Endothelial cell of umbilical vein (primary cell): ENCODE measurements at regions of chr18 and their contacts with region 1.

Region 1: DNA sequence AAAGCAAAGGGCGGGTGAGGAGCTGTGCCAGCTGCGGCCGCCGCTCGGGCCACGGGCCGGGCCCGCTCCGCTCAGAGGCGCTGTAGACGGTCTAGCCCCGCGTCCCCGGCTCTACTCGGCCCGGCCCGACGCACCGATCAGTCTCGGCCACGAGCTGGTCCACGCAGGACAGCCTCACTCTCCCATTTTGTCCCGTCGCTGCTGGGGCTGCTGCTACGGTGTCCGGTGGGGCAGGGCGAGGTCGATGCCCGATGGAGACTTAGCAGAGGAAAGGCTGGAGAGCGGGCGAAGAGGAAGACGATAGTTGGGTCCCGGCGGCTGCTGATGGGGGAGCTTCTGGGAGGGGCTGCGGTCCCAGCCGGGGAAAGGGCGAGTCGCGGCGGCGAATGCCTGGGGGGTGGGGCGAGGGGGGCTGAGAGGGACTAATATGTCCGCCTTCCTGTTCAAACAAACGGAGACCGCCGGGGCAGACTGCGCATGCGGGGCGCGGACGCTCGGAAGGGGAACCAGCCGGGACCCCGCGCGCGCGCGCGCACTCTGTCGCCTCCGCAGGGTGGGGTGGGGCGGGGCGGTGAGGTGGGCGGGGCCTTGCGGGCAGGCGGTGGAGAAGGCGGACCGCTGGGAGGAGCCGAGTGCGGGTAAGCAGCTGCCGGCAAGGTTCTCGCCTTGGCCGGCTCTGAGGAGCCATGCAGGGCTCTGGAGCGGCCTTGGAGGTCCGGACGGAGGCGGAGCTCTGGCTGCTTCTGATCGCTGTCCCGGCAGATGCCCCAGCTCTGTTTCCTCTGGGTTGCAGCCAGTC is at the start of gene ROCK1:
- DNase-seq: peak; percentile 96
- H3K4me3 ChIP-seq: peak within 1 kb of the TSS; percentile 73 to 100 (median 99)
- H3K27ac ChIP-seq: peak within 1 kb of the TSS; percentile 61
- H3K4me1 ChIP-seq: peaks cover 23% of the 10 kb centered on the region
- H3K27me3 ChIP-seq: peaks cover 0 to 3% of the 10 kb centered on the region in 2 experiments
- CTCF ChIP-seq: no peak
- POLR2A ChIP-seq: peak; percentile 59
- total RNA-seq, gene ROCK1: 53.0 and 53.7 TPM in 2 replicates

Region 2: GRCh38 chr18:20971886-20972267 is 139.7 kb before region 1 on chr18:
- CTCF ChIA-PET with region 1: interaction called, 13 read pairs
- POLR2A ChIA-PET with region 1: no interaction called
- dilution Hi-C with region 1: no loop called
- intact Hi-C with region 1: loop called (anchors 2 kb)
- DNase-seq: peak; percentile 42
- H3K4me3 ChIP-seq: no peak overlapping the region
- H3K27ac ChIP-seq: no peak overlapping the region
- H3K4me1 ChIP-seq: no peaks in the 10 kb centered on the region
- H3K27me3 ChIP-seq: no peaks in the 10 kb centered on the region
- CTCF ChIP-seq: peak; percentile 25 to 53
- POLR2A ChIP-seq: no peak

Region 3: DNA sequence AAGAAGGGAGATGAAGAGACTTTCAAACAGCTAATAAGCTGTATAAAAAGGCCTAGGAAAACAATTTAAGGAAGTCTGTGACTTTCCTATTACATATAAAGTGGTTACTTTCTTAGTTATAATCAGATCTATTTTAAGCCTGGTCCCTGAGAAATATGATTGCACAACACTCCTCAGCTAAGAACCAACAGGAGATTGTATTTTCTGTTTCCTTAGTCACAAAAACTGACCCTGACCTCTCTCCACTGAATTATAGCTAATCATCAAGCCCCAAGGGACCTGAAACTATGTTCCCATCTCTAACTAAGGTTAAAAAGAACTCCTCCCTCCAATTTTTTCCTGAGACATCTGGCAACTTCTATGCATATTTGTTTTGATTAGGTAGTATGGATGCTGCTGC is 106.8 kb before region 1 on chr18:
- CTCF ChIA-PET with region 1: no interaction called
- POLR2A ChIA-PET with region 1: no interaction called
- dilution Hi-C with region 1: no loop called
- intact Hi-C with region 1: loop called (anchors 10 kb)
- DNase-seq: peak; percentile 42
- H3K4me3 ChIP-seq: no peak overlapping the region
- H3K27ac ChIP-seq: no peak overlapping the region
- H3K4me1 ChIP-seq: no peaks in the 10 kb centered on the region
- H3K27me3 ChIP-seq: no peaks in the 10 kb centered on the region
- CTCF ChIP-seq: no peak
- POLR2A ChIP-seq: no peak

Region 4: GRCh38 chr18:21049306-21049705 is 62.2 kb before region 1 on chr18:
- CTCF ChIA-PET with region 1: no interaction called
- POLR2A ChIA-PET with region 1: no interaction called
- dilution Hi-C with region 1: no loop called
- intact Hi-C with region 1: loop called (anchors 2 kb)
- DNase-seq: peak; percentile 69
- H3K4me3 ChIP-seq: no peak overlapping the region
- H3K27ac ChIP-seq: no peak overlapping the region
- H3K4me1 ChIP-seq: peaks cover 9% of the 10 kb centered on the region
- H3K27me3 ChIP-seq: no peaks in the 10 kb centered on the region
- CTCF ChIP-seq: no peak
- POLR2A ChIP-seq: no peak

Region 5: DNA sequence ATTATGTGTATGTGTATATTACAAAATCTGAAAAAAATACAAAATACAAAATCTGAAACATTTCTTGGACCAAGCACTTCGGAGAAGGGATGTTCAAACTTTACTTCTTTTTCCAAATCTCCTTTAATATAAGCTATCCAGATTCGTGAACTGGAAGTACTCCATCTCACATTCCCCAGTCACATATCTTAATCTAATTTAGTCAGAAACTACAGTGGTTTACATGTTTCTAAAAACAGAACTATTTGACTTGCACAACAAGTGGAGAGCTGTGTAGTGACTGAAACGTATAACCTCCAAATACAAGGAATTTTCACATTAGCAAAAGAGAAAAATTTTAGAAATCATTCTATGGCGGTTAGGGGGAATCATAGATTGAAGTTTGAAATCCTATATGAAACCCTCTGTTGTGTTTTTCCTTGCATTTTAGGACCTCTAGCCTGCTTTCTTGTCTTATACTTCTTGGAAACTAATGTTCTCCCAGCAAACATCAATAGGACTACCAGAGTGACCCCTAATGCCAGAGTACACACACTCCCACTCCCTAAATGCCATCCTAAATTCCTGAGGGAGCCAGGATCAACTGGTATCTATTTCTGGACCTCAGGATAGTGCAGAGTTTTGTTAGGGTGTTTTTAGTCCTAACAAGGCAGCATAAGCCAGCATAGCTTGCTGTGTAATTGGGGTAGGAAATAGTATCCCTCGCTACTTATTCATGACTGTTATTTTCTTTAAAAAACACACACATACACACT is 30.3 kb after region 1 on chr18:
- CTCF ChIA-PET with region 1: no interaction called
- POLR2A ChIA-PET with region 1: no interaction called
- dilution Hi-C with region 1: no loop called
- intact Hi-C with region 1: no loop called
- DNase-seq: no peak
- H3K4me3 ChIP-seq: no peak overlapping the region
- H3K27ac ChIP-seq: no peak overlapping the region
- H3K4me1 ChIP-seq: no peaks in the 10 kb centered on the region
- H3K27me3 ChIP-seq: peaks cover 0 to 4% of the 10 kb centered on the region in 2 experiments
- CTCF ChIP-seq: no peak
- POLR2A ChIP-seq: no peak

Region 6: GRCh38 chr18:21155443-21155842 is 43.9 kb after region 1 on chr18:
- CTCF ChIA-PET with region 1: no interaction called
- POLR2A ChIA-PET with region 1: no interaction called
- dilution Hi-C with region 1: no loop called
- intact Hi-C with region 1: no loop called
- DNase-seq: no peak
- H3K4me3 ChIP-seq: no peak overlapping the region
- H3K27ac ChIP-seq: no peak overlapping the region
- H3K4me1 ChIP-seq: no peaks in the 10 kb centered on the region
- H3K27me3 ChIP-seq: no peaks in the 10 kb centered on the region
- CTCF ChIP-seq: no peak
- POLR2A ChIP-seq: no peak

Region 7: GRCh38 chr18:21571772-21572171 is 460.2 kb after region 1 on chr18:
- CTCF ChIA-PET with region 1: no interaction called
- POLR2A ChIA-PET with region 1: no interaction called
- dilution Hi-C with region 1: no loop called
- intact Hi-C with region 1: no loop called
- DNase-seq: no peak
- H3K4me3 ChIP-seq: no peak overlapping the region
- H3K27ac ChIP-seq: no peak overlapping the region
- H3K4me1 ChIP-seq: peaks cover 11% of the 10 kb centered on the region
- H3K27me3 ChIP-seq: no peaks in the 10 kb centered on the region
- CTCF ChIP-seq: no peak
- POLR2A ChIP-seq: no peak

Region 8: GRCh38 chr18:21600526-21601410 is 489.2 kb after region 1 on chr18 and contains the start of gene ESCO1:
- CTCF ChIA-PET with region 1: no interaction called
- POLR2A ChIA-PET with region 1: no interaction called
- dilution Hi-C with region 1: no loop called
- intact Hi-C with region 1: loop called (anchors 2 kb)
- DNase-seq: peak; percentile 98
- H3K4me3 ChIP-seq: peak within 1 kb of the TSS; percentile 47 to 89 (median 68)
- H3K27ac ChIP-seq: peak within 1 kb of the TSS; percentile 59
- H3K4me1 ChIP-seq: no peaks in the 10 kb centered on the region
- H3K27me3 ChIP-seq: no peaks in the 10 kb centered on the region
- CTCF ChIP-seq: peak; percentile 97 to 99
- POLR2A ChIP-seq: peak; percentile 83
- total RNA-seq, gene ESCO1: 9.1 and 12.0 TPM in 2 replicates